RWPE1 (cell line): ENCODE measurements at regions of chr3 and their contacts with region 1.

Region 1: GRCh38 chr3:127217598-127218451 is 24.9 kb downstream of the PRR23E start:
- DNase-seq: peak; percentile 40
- H3K27ac ChIP-seq: peak overlapping the region; percentile 73
- CTCF ChIP-seq: no peak

Region 2: DNA sequence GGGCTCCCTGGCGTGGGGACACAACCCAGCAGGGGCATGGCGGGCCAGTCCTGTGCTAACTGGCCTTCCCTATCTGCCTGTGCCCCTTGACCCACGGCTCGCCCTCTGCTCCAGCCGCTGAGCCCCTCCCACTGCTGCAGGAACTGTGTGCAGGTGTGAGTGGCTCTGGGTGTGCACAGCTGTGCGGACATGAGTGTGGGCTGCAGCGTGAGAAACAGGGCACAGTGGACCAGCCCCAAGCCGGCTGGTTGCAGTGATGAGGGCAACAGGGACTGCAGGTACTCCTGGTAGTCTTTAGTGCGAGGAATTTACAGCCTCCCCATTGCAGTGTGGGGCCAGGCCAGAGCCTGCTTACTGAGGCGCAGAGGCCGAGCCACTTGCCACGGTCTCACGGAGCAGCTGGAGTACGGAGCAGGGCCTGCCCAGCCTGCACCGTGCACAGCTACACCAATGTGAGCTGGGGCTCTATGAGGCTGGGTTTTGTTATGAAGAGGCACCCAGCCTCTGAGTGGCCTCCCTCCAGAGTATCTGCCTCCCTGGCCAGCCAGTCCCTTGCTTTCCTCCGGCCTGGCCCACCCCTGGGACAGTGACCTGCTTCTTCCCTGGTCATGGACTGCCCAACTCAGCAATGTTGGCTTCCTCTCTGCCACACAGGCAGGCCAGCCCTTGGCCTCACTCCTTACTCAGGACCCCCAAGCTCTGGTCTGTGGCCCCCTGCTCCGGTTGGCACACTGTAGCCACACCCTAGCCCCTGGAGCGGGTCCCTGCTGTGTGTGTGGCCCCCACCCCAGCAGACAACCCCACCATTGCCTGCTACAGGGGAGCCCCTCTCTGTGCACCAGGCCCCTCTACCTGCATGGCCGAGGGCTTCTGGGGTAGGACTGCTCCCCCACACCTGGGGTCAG is 187.1 kb before region 1 on chr3:
- CTCF ChIA-PET with region 1: interaction called, 10 read pairs
- POLR2A ChIA-PET with region 1: no interaction called
- DNase-seq: no peak
- H3K27ac ChIP-seq: peak overlapping the region; percentile 84
- CTCF ChIP-seq: no peak

Region 3: DNA sequence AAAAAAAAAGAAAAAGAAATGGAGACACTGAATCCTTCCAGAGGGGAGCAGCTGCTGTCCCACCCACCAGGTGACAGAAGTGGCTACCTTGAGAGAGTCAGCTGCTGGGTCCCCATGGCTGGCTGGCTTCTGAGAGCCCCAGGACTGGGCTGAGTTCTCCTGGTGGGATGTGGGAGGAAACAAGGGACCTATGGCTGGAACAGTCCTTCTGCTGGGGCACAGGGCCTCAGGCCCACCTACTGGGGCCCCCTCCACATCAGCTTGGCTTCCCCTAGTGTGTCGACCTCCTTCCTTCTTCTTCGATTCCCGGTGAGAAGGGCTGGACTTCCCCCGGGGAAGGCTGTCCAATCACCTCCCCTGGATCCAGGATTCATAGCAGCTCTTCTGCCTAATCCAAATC is 37.7 kb after region 1 on chr3:
- CTCF ChIA-PET with region 1: interaction called, 11 read pairs
- POLR2A ChIA-PET with region 1: no interaction called
- DNase-seq: no peak
- H3K27ac ChIP-seq: no peak overlapping the region
- CTCF ChIP-seq: no peak

Region 4: GRCh38 chr3:127448161-127448561 is 230.3 kb after region 1 on chr3:
- CTCF ChIA-PET with region 1: no interaction called
- POLR2A ChIA-PET with region 1: no interaction called
- DNase-seq: no peak
- H3K27ac ChIP-seq: no peak overlapping the region
- CTCF ChIP-seq: no peak